Activated CD4-positive, alpha-beta memory T cell treated with anti-CD3 and anti-CD28 coated beads for 36 hours (primary cell): ENCODE measurements at regions of chr7 and their contacts with region 1.

Region 1: GRCh38 chr7:97027427-97028234 is 3.0 kb upstream of the DLX5 start:
- DNase-seq: peak; percentile 79
- H3K4me3 Mint-ChIP-seq: peak overlapping the region; percentile 55
- H3K27ac Mint-ChIP-seq: no peak overlapping the region
- H3K4me1 Mint-ChIP-seq: peaks cover 38% of the 10 kb centered on the region
- H3K27me3 Mint-ChIP-seq: peaks cover 62% of the 10 kb centered on the region

Region 2: GRCh38 chr7:95916573-95917297 is 1110.9 kb before region 1 on chr7:
- CTCF ChIA-PET with region 1: interaction called, 43 read pairs
- POLR2A ChIA-PET with region 1: no interaction called
- intact Hi-C with region 1: loop called (anchors 1 kb)
- DNase-seq: peak; percentile 82
- H3K4me3 Mint-ChIP-seq: no peak overlapping the region
- H3K27ac Mint-ChIP-seq: no peak overlapping the region
- H3K4me1 Mint-ChIP-seq: peaks cover 2% of the 10 kb centered on the region
- H3K27me3 Mint-ChIP-seq: peaks cover 18% of the 10 kb centered on the region

Region 3: DNA sequence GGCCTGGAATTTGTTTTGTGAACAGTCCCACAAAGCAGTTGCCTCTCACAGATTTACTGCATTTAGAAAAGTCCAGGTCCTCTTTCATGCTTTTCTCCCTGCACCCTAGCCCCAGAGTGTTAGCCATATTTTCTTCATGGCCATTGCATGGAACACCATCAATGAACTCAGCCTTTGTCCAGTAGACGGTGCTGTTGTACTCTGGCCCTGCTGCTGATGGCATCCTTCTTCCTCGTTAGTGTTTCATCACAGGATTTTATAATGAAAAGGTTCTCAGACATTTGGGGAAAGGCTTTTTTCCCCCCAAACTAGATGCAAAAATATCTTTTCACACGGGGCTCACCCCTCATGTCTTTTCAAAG is 612.7 kb before region 1 on chr7:
- CTCF ChIA-PET with region 1: interaction called, 11 read pairs
- POLR2A ChIA-PET with region 1: no interaction called
- intact Hi-C with region 1: loop called (anchors 1 kb)
- DNase-seq: peak; percentile 55
- H3K4me3 Mint-ChIP-seq: no peak overlapping the region
- H3K27ac Mint-ChIP-seq: no peak overlapping the region
- H3K4me1 Mint-ChIP-seq: no peaks in the 10 kb centered on the region
- H3K27me3 Mint-ChIP-seq: peaks cover 2% of the 10 kb centered on the region

Region 4: GRCh38 chr7:96823274-96823673 is 204.4 kb before region 1 on chr7:
- CTCF ChIA-PET with region 1: no interaction called
- POLR2A ChIA-PET with region 1: no interaction called
- intact Hi-C with region 1: no loop called
- DNase-seq: no peak
- H3K4me3 Mint-ChIP-seq: no peak overlapping the region
- H3K27ac Mint-ChIP-seq: no peak overlapping the region
- H3K4me1 Mint-ChIP-seq: peaks cover 4% of the 10 kb centered on the region
- H3K27me3 Mint-ChIP-seq: peaks cover 41% of the 10 kb centered on the region

Region 5: GRCh38 chr7:96837593-96837992 is 190.0 kb before region 1 on chr7:
- CTCF ChIA-PET with region 1: no interaction called
- POLR2A ChIA-PET with region 1: no interaction called
- intact Hi-C with region 1: loop called (anchors 5 kb)
- DNase-seq: peak; percentile 26
- H3K4me3 Mint-ChIP-seq: peak overlapping the region; percentile 14
- H3K27ac Mint-ChIP-seq: no peak overlapping the region
- H3K4me1 Mint-ChIP-seq: peaks cover 31% of the 10 kb centered on the region
- H3K27me3 Mint-ChIP-seq: peaks cover 47% of the 10 kb centered on the region

Region 6: GRCh38 chr7:97006036-97006815 is 21.4 kb before region 1 on chr7:
- CTCF ChIA-PET with region 1: interaction called, 11 read pairs
- POLR2A ChIA-PET with region 1: no interaction called
- intact Hi-C with region 1: loop called (anchors 2 kb)
- DNase-seq: peak; percentile 51
- H3K4me3 Mint-ChIP-seq: peak overlapping the region; percentile 67
- H3K27ac Mint-ChIP-seq: no peak overlapping the region
- H3K4me1 Mint-ChIP-seq: peaks cover 20% of the 10 kb centered on the region
- H3K27me3 Mint-ChIP-seq: peaks cover 81% of the 10 kb centered on the region

Region 7: GRCh38 chr7:97117372-97118188 is 89.9 kb after region 1 on chr7 and contains the start of gene SDHAF3:
- CTCF ChIA-PET with region 1: no interaction called
- POLR2A ChIA-PET with region 1: no interaction called
- intact Hi-C with region 1: no loop called
- DNase-seq: peak; percentile 99
- H3K4me3 Mint-ChIP-seq: peak within 1 kb of the TSS; percentile 89
- H3K27ac Mint-ChIP-seq: peak within 1 kb of the TSS; percentile 87
- H3K4me1 Mint-ChIP-seq: peaks cover 27% of the 10 kb centered on the region
- H3K27me3 Mint-ChIP-seq: no peaks in the 10 kb centered on the region
- total RNA-seq, gene SDHAF3: 21.8 to 24.5 TPM